Mammary epithelial cell (primary cell): ENCODE measurements at regions of chr14 and their contacts with region 1.

Region 1: DNA sequence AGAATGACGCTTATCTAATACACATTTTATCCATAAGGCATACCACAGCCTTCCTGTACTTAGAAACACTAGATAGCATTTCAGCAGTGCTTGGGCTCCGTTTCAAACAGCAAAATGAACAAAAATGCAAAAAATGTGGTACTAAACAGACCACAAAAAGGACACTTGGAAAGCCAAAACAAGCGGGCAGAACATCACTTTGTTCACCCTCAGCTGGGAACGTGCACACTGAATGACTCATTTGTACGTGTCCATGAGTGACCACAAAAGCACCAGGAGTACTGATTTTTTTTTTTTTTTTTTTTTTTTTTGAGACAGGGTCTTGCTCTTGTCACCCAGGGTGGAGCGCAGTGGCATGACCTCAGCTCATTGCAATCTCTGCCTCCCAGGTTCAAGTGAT is 8.9 kb upstream of the FOXN3 start:
- DNase-seq: peak; percentile 82
- H3K4me3 ChIP-seq: no peak overlapping the region
- H3K27ac ChIP-seq: no peak overlapping the region
- H3K4me1 ChIP-seq: peaks cover 40% of the 10 kb centered on the region
- H3K27me3 ChIP-seq: peaks cover 2% of the 10 kb centered on the region
- CTCF ChIP-seq: no peak

Region 2: GRCh38 chr14:89504602-89505313 is 78.8 kb after region 1 on chr14:
- CTCF ChIA-PET with region 1: no interaction called
- dilution Hi-C with region 1: no loop called
- in situ Hi-C with region 1: no loop called
- intact Hi-C with region 1: loop called (anchors 5 kb)
- DNase-seq: peak; percentile 63
- H3K4me3 ChIP-seq: no peak overlapping the region
- H3K27ac ChIP-seq: no peak overlapping the region
- H3K4me1 ChIP-seq: peaks cover 18% of the 10 kb centered on the region
- H3K27me3 ChIP-seq: no peaks in the 10 kb centered on the region
- CTCF ChIP-seq: no peak

Region 3: DNA sequence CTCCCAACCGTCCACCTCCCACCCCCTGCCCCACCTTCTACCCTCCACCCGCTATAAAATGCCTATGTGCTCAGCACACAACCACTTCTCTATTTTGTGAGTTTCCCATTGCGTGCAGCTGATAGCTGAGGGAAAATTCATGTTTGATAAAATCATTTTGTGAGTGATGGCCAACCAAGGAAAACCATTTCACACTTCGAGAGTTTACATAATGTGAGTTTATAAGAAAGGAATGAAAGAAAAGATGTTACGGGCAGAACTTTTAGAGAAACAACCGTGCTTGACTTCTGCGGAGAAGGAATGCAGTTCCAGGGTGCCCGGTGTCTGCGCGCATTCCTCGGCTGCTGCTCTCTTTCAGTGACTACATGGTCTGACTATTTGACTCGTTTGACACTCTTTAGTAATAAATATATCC is 387.7 kb after region 1 on chr14:
- CTCF ChIA-PET with region 1: no interaction called
- dilution Hi-C with region 1: no loop called
- in situ Hi-C with region 1: no loop called
- intact Hi-C with region 1: no loop called
- DNase-seq: no peak
- H3K4me3 ChIP-seq: peak overlapping the region in 2 of 3 experiments; percentile 21 to 30
- H3K27ac ChIP-seq: peak overlapping the region; percentile 34
- H3K4me1 ChIP-seq: peaks cover 3% of the 10 kb centered on the region
- H3K27me3 ChIP-seq: no peaks in the 10 kb centered on the region
- CTCF ChIP-seq: no peak